ENCODE measurements at regions of chr2 and their contacts with region 1.

Region 1: DNA sequence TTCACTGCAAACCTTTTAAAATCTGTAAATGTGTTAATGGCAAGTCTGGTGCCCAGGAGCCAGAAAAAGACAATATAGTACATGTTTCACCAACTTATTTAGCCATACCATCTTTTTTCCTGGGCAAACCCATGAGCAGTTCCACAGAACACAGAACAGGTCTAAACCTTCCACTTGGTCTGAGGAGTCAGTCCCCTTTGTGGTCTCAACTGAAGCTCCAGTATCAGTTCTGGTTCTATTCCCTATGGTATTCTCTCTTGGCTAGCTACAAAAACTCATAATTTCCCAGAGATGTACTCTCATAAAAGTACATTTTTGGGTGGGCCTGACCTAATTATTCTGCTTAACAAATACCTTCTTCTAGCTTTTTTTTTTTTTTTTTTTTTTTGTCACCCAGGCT is 31.2 kb downstream of the STK17B start:
- DNase-seq: no peak
- ATAC-seq: no peak
- H3K4me3 ChIP-seq: no peak overlapping the region
- H3K4me3 Mint-ChIP-seq: no peak overlapping the region
- H3K27ac ChIP-seq: no peak overlapping the region
- H3K27ac Mint-ChIP-seq: peak overlapping the region; percentile 45 to 72
- H3K4me1 ChIP-seq: no peaks in the 10 kb centered on the region
- H3K4me1 Mint-ChIP-seq: peaks cover 35 to 42% of the 10 kb centered on the region in 2 donors
- H3K27me3 ChIP-seq: no peaks in the 10 kb centered on the region
- H3K27me3 Mint-ChIP-seq: no peaks in the 10 kb centered on the region
- CTCF ChIP-seq: no peak

Region 2: DNA sequence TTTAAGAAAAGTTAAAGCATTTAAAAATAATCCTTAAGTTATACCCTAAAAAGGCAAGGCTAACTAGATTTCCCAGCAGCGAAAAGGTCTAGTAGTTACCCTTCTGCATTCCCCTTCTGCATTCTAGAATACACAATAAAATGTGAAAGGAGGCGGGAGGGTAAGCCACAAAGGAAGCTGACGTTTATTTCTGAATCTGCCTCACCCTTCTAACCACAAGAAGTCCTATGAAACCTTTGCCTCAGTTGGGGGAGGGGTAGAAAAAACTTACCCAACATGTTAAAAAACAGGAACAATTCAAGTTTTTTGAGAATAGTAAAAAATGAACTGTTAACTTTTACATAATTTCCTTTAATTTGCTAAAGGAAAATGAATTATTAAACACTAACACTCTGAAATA is 19.9 kb after region 1 on chr2:
- intact Hi-C with region 1: loop called (anchors 2 kb)
- DNase-seq: peak in 1 of 2 donors; percentile 92
- ATAC-seq: peak; percentile 69 to 84 (median 73)
- H3K4me3 ChIP-seq: peak overlapping the region; percentile 17
- H3K4me3 Mint-ChIP-seq: peak overlapping the region; percentile 75
- H3K27ac ChIP-seq: peak overlapping the region; percentile 88
- H3K27ac Mint-ChIP-seq: peak overlapping the region; percentile 86 to 95
- H3K4me1 ChIP-seq: peaks cover 35% of the 10 kb centered on the region
- H3K4me1 Mint-ChIP-seq: peaks cover 56 to 57% of the 10 kb centered on the region in 2 donors
- H3K27me3 ChIP-seq: no peaks in the 10 kb centered on the region
- H3K27me3 Mint-ChIP-seq: no peaks in the 10 kb centered on the region
- CTCF ChIP-seq: no peak

Measured in natural killer cell (primary cell).